ENCODE measurements at regions of chr2 and their contacts with region 1.

Region 1: DNA sequence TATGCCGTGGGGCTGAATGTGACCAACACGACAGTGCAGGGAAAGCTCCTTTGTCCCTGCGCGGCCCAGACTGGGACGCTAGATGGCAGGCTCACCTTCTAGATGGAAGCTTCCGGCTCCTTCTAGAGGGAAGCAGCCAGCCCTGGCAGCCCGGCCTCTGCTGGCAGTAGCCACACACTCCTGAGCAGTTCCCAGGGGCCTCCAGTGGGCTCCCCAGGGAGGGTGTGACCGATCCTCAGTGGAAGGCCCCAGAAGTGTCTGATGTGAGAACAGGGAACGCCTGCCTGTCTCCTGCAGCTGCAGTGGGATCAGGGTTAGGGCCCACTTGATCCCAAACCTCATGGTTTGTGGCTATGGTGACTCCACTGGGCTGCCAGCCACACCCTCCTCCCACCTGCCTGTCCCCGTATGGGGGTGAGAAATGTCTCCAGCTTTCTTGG is 48.5 kb upstream of the LRPPRC start:
- DNase-seq: peak; percentile 50 to 78 (median 71)
- ATAC-seq: peak; percentile 98
- H3K4me3 ChIP-seq: no peak overlapping the region
- H3K4me3 Mint-ChIP-seq: peak overlapping the region in 1 of 10 donors; percentile 48
- H3K27ac ChIP-seq: no peak overlapping the region
- H3K27ac Mint-ChIP-seq: no peak overlapping the region
- H3K4me1 ChIP-seq: no peaks in the 10 kb centered on the region
- H3K4me1 Mint-ChIP-seq: peaks cover 0 to 2% (median 0%) of the 10 kb centered on the region in 7 donors
- H3K27me3 ChIP-seq: no peaks in the 10 kb centered on the region
- H3K27me3 Mint-ChIP-seq: peaks cover 0 to 3% (median 0%) of the 10 kb centered on the region in 5 donors

Region 2: DNA sequence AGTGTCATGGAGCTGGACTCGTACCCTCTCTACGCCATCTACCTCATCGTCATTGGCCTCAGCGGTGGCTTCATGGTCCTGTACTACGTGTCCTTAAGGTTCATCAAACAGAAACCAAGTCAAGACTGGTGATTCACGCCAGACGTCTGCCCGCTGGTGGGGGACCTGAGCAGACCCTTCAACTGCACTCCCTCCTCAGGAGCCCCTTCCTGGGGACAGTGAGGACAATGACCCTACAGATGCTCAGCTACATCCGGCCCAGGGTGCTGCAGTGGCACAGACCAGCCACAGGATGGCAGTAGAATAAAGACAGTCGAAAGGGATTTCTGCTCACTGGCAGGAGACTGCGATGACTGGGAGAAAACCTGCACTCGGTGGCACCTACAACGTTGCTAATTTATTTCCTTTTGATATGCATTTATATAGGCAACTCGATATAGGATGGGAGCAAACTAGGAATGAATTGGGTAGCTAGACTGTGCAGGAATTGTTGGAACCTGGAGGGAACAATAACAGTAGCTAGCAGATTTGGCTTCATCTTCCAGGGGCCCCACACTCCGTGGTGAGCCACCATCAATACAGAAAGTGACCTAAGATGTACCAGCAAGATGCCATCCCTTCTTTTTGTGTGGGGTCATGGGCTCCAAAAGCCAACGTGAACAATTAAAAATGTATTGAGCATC is 166.4 kb before region 1 on chr2:
- CTCF ChIA-PET with region 1: no interaction called
- POLR2A ChIA-PET with region 1: no interaction called
- intact Hi-C with region 1: loop called in 1 of 2 experiments (anchors 2 kb)
- DNase-seq: peak; percentile 16 to 68 (median 47)
- ATAC-seq: peak; percentile 86
- H3K4me3 ChIP-seq: no peak overlapping the region
- H3K4me3 Mint-ChIP-seq: peak overlapping the region in 2 of 10 donors; percentile 54 to 58
- H3K27ac ChIP-seq: no peak overlapping the region
- H3K27ac Mint-ChIP-seq: no peak overlapping the region
- H3K4me1 ChIP-seq: no peaks in the 10 kb centered on the region
- H3K4me1 Mint-ChIP-seq: peaks cover 0 to 6% (median 5%) of the 10 kb centered on the region in 7 donors
- H3K27me3 ChIP-seq: no peaks in the 10 kb centered on the region
- H3K27me3 Mint-ChIP-seq: peaks cover 3 to 32% (median 16%) of the 10 kb centered on the region in 5 donors

Region 3: GRCh38 chr2:44201648-44202165 is 157.4 kb after region 1 on chr2:
- CTCF ChIA-PET with region 1: no interaction called
- POLR2A ChIA-PET with region 1: no interaction called
- intact Hi-C with region 1: no loop called
- DNase-seq: no peak
- ATAC-seq: no peak
- H3K4me3 ChIP-seq: no peak overlapping the region
- H3K4me3 Mint-ChIP-seq: peak overlapping the region in 6 of 10 donors; percentile 2 to 61 (median 20)
- H3K27ac ChIP-seq: no peak overlapping the region
- H3K27ac Mint-ChIP-seq: peak overlapping the region in 5 of 9 donors; percentile 6 to 76 (median 29)
- H3K4me1 ChIP-seq: peaks cover 0 to 20% of the 10 kb centered on the region in 2 donors
- H3K4me1 Mint-ChIP-seq: peaks cover 28 to 84% (median 76%) of the 10 kb centered on the region in 7 donors
- H3K27me3 ChIP-seq: no peaks in the 10 kb centered on the region
- H3K27me3 Mint-ChIP-seq: no peaks in the 10 kb centered on the region

Region 4: GRCh38 chr2:44291281-44292248 is 247.3 kb after region 1 on chr2:
- CTCF ChIA-PET with region 1: interaction called, 6 read pairs
- POLR2A ChIA-PET with region 1: no interaction called
- intact Hi-C with region 1: loop called in 1 of 2 experiments (anchors 1 kb)
- DNase-seq: no peak
- ATAC-seq: no peak
- H3K4me3 ChIP-seq: no peak overlapping the region
- H3K4me3 Mint-ChIP-seq: no peak overlapping the region
- H3K27ac ChIP-seq: no peak overlapping the region
- H3K27ac Mint-ChIP-seq: peak overlapping the region in 1 of 9 donors; percentile 33
- H3K4me1 ChIP-seq: peaks cover 0 to 1% of the 10 kb centered on the region in 2 donors
- H3K4me1 Mint-ChIP-seq: peaks cover 2 to 11% (median 10%) of the 10 kb centered on the region in 7 donors
- H3K27me3 ChIP-seq: no peaks in the 10 kb centered on the region
- H3K27me3 Mint-ChIP-seq: peaks cover 0 to 14% (median 5%) of the 10 kb centered on the region in 5 donors

Region 5: DNA sequence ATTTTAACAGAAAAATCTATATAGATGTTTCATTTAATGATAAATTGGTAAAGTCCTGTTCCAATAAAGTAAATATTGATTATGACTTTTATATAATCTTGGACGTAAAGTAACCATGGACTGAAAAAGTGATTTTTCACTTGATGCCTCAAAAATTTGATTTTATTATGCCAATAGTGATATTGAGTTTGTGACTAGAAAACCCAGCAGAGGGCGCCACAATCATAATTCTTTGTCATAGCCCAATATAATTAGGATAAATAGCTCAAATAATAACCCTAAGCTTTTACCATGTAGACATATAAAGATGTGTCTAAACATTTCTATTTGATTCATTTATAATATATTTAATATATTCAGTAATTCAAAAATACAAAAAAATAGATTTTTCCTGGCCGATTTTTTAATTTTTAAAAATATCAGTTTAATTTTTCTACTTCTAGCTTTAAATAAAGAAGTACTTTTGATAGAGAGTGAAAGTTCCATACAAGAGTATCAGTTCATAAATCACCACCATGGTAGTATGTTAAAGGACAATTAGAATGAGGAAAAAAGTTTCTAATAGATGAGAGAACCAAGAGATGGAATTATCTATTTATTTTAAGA is 348.1 kb after region 1 on chr2:
- CTCF ChIA-PET with region 1: interaction called, 6 read pairs
- POLR2A ChIA-PET with region 1: no interaction called
- intact Hi-C with region 1: loop called (anchors 1 kb)
- DNase-seq: peak in 7 of 9 donors; percentile 10 to 34 (median 23)
- ATAC-seq: no peak
- H3K4me3 ChIP-seq: no peak overlapping the region
- H3K4me3 Mint-ChIP-seq: no peak overlapping the region
- H3K27ac ChIP-seq: no peak overlapping the region
- H3K27ac Mint-ChIP-seq: no peak overlapping the region
- H3K4me1 ChIP-seq: no peaks in the 10 kb centered on the region
- H3K4me1 Mint-ChIP-seq: peaks cover 0 to 19% (median 10%) of the 10 kb centered on the region in 7 donors
- H3K27me3 ChIP-seq: no peaks in the 10 kb centered on the region
- H3K27me3 Mint-ChIP-seq: no peaks in the 10 kb centered on the region

Region 6: GRCh38 chr2:44807344-44808025 is 763.2 kb after region 1 on chr2:
- CTCF ChIA-PET with region 1: no interaction called
- POLR2A ChIA-PET with region 1: no interaction called
- intact Hi-C with region 1: no loop called
- DNase-seq: no peak
- ATAC-seq: no peak
- H3K4me3 ChIP-seq: no peak overlapping the region
- H3K4me3 Mint-ChIP-seq: no peak overlapping the region
- H3K27ac ChIP-seq: no peak overlapping the region
- H3K27ac Mint-ChIP-seq: no peak overlapping the region
- H3K4me1 ChIP-seq: no peaks in the 10 kb centered on the region
- H3K4me1 Mint-ChIP-seq: peaks cover 0 to 9% (median 0%) of the 10 kb centered on the region in 7 donors
- H3K27me3 ChIP-seq: peaks cover 4 to 9% of the 10 kb centered on the region in 2 donors
- H3K27me3 Mint-ChIP-seq: peaks cover 65 to 91% (median 80%) of the 10 kb centered on the region in 5 donors

Region 7: GRCh38 chr2:44955593-44956392 is 911.5 kb after region 1 on chr2:
- CTCF ChIA-PET with region 1: interaction called, 6 read pairs
- POLR2A ChIA-PET with region 1: no interaction called
- intact Hi-C with region 1: loop called in 1 of 2 experiments (anchors 1 kb)
- DNase-seq: peak; percentile 25 to 80 (median 64)
- ATAC-seq: peak; percentile 79
- H3K4me3 ChIP-seq: no peak overlapping the region
- H3K4me3 Mint-ChIP-seq: peak overlapping the region in 7 of 10 donors; percentile 5 to 72 (median 35)
- H3K27ac ChIP-seq: no peak overlapping the region
- H3K27ac Mint-ChIP-seq: peak overlapping the region in 1 of 9 donors; percentile 62
- H3K4me1 ChIP-seq: peaks cover 0 to 10% of the 10 kb centered on the region in 2 donors
- H3K4me1 Mint-ChIP-seq: peaks cover 13 to 32% (median 20%) of the 10 kb centered on the region in 7 donors
- H3K27me3 ChIP-seq: no peaks in the 10 kb centered on the region
- H3K27me3 Mint-ChIP-seq: peaks cover 50 to 77% (median 65%) of the 10 kb centered on the region in 5 donors